Activated CD4-positive, alpha-beta memory T cell treated with anti-CD3 and anti-CD28 coated beads, Interleukin-2, amount 10 ng/mL, durations not matched to agents 7 days and 5 days (primary cell): ENCODE measurements at regions of chr12 and their contacts with region 1.

Region 1: GRCh38 chr12:45728630-45729232 is 775 bp upstream of the ARID2 start:
- DNase-seq: peak; percentile 98
- H3K4me3 Mint-ChIP-seq: peak overlapping the region; percentile 93
- H3K27ac Mint-ChIP-seq: peak overlapping the region; percentile 100
- H3K4me1 Mint-ChIP-seq: peaks cover 23% of the 10 kb centered on the region
- H3K27me3 Mint-ChIP-seq: no peaks in the 10 kb centered on the region

Region 2: GRCh38 chr12:45215419-45216229 is 513.1 kb before region 1 on chr12 and contains the start of gene ANO6:
- CTCF ChIA-PET with region 1: interaction called, 3 read pairs
- POLR2A ChIA-PET with region 1: interaction called, 29 read pairs
- DNase-seq: peak; percentile 78
- H3K4me3 Mint-ChIP-seq: peak within 1 kb of the TSS; percentile 96
- H3K27ac Mint-ChIP-seq: peak within 1 kb of the TSS; percentile 92
- H3K4me1 Mint-ChIP-seq: peaks cover 46% of the 10 kb centered on the region
- H3K27me3 Mint-ChIP-seq: no peaks in the 10 kb centered on the region
- total RNA-seq, gene ANO6: 29.2 to 29.8 TPM

Region 3: DNA sequence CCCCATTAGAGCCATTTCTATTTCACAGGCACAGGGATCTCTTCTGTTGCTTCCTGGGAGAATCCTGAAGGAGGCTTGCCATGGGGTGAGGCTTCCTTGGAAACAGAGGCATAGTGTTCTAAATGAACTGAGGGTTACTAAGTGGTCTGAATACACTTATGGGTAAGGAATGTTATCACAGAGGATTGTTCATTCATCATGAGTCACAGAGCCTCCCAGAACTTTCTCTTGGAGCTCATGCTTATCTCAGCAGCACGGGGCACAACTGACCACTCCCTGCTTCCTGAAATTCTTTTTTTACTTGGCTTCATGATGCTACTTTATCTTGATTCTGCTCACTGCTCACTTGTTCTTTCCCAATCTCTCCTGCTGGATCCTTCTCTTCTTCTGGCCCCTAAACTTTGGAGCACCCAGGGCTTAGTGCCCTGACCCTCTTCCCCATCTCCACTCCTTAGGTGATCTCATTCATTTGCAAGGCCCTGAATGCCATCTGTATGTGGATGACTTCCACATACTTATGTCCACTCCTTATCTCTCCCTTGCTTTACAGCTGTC is 454.9 kb before region 1 on chr12:
- CTCF ChIA-PET with region 1: no interaction called
- POLR2A ChIA-PET with region 1: no interaction called
- DNase-seq: no peak
- H3K4me3 Mint-ChIP-seq: no peak overlapping the region
- H3K27ac Mint-ChIP-seq: no peak overlapping the region
- H3K4me1 Mint-ChIP-seq: no peaks in the 10 kb centered on the region
- H3K27me3 Mint-ChIP-seq: no peaks in the 10 kb centered on the region

Region 4: DNA sequence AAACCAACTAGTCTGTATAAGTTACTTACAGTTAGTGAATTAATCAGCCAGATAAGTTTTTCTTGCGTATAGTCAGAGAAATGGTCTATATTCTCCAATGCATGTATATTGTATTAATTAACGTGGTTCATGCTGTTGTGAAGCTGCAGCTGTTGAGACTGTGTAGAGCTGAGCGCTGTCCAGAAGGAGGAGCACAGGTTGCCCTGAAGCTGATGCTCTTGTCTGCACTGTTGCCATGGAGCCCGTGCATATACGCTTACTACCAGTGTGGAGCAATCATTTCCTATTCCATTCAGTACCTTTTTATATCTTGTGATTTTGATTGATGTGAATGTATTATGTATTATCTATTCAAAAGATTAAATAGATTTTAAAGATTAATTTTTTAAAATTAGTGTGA is 73.5 kb before region 1 on chr12:
- CTCF ChIA-PET with region 1: interaction called, 20 read pairs
- POLR2A ChIA-PET with region 1: interaction called, 32 read pairs
- DNase-seq: peak; percentile 52
- H3K4me3 Mint-ChIP-seq: no peak overlapping the region
- H3K27ac Mint-ChIP-seq: no peak overlapping the region
- H3K4me1 Mint-ChIP-seq: no peaks in the 10 kb centered on the region
- H3K27me3 Mint-ChIP-seq: peaks cover 32% of the 10 kb centered on the region

Region 5: DNA sequence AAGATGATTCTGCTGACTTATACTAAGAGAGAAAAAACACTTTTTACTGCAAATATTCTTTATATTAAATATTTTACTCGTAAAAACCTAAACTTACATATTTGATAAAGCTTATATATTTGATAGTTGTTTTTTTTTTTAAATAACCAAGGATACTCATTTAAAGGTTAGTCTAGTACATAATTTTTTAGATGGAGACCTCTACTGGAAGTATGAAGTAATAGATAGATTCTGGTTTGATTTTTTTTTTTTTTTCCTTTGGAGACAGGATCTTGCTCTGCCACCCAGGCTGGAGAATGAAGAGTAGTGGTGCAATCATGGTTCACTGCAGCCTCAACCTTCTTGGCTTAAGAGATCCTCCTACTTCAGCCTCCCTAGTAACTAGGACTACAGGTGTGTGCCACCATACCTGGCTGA is 17.1 kb after region 1 on chr12:
- CTCF ChIA-PET with region 1: interaction called, 16 read pairs
- POLR2A ChIA-PET with region 1: interaction called, 62 read pairs
- DNase-seq: no peak
- H3K4me3 Mint-ChIP-seq: no peak overlapping the region
- H3K27ac Mint-ChIP-seq: no peak overlapping the region
- H3K4me1 Mint-ChIP-seq: peaks cover 25% of the 10 kb centered on the region
- H3K27me3 Mint-ChIP-seq: no peaks in the 10 kb centered on the region

Region 6: DNA sequence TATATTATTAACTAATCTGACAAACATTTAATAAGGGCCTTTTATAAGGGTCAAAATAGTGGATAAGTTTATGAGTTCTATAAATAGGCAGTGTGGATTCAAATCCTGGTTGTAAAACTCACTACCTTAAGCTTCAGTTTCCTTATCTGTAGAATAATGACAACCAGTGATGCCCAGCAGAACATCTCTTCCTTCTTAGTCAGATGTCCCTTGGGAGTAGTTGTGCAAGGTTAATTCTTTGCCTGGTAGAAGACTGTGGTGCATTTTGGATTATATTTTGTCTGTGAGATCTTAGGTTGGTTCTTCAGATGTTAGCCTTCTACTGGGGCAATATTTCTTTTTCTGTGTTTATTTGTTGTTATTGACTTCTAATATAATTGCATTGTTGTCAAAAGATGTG is 60.3 kb after region 1 on chr12:
- CTCF ChIA-PET with region 1: no interaction called
- POLR2A ChIA-PET with region 1: no interaction called
- DNase-seq: no peak
- H3K4me3 Mint-ChIP-seq: no peak overlapping the region
- H3K27ac Mint-ChIP-seq: no peak overlapping the region
- H3K4me1 Mint-ChIP-seq: no peaks in the 10 kb centered on the region
- H3K27me3 Mint-ChIP-seq: no peaks in the 10 kb centered on the region

Region 7: GRCh38 chr12:45959025-45959424 is 230.3 kb after region 1 on chr12:
- CTCF ChIA-PET with region 1: no interaction called
- POLR2A ChIA-PET with region 1: no interaction called
- DNase-seq: no peak
- H3K4me3 Mint-ChIP-seq: no peak overlapping the region
- H3K27ac Mint-ChIP-seq: no peak overlapping the region
- H3K4me1 Mint-ChIP-seq: peaks cover 4% of the 10 kb centered on the region
- H3K27me3 Mint-ChIP-seq: no peaks in the 10 kb centered on the region

Region 8: DNA sequence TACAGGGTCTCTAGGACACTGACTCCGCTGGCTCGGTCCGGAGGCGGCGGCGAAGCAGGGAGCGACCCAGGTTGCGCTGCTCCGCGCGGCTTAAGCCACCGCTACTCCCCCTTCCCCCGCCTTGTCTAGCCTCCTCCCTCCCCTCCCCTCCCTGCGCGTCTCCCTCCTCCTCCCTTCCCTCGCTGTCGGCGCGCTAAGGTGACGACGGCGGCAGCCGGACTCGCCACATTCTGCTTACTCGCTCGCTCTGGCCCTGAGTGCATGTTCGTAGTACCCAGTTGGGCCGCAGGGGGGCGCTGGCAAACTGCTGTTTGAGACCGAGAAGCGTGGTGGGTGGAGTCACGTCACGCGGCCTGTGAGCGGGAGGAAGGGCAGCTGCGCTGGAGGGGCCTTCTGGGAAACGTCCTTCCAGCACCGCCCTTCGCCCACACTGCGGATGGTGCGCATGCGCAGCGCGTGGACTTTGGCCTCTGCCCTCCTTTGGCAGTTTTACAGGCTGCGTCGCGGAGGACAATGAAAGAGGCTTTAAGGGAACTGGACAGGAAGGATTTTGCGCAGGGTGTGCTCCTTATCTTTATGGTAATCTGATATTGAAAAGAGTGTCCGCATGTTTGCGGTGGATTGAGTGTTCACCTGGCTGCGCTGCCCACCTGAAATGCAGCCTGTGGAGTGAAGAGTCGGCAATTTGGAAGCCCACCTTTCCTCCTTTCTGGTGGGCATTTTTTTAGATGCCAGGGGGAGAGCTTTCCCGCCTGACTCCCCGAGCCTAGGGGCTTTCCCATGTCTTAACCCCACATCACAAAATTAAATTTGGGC is 261.9 kb after region 1 on chr12 and contains the start of gene SCAF11:
- CTCF ChIA-PET with region 1: interaction called, 8 read pairs
- POLR2A ChIA-PET with region 1: interaction called, 140 read pairs
- DNase-seq: peak; percentile 100
- H3K4me3 Mint-ChIP-seq: peak within 1 kb of the TSS; percentile 95
- H3K27ac Mint-ChIP-seq: peak within 1 kb of the TSS; percentile 97
- H3K4me1 Mint-ChIP-seq: peaks cover 46% of the 10 kb centered on the region
- H3K27me3 Mint-ChIP-seq: no peaks in the 10 kb centered on the region
- total RNA-seq, gene SCAF11: 129 to 136 TPM